A549 (cell line): ENCODE measurements at regions of chr5 and their contacts with region 1.

Region 1: DNA sequence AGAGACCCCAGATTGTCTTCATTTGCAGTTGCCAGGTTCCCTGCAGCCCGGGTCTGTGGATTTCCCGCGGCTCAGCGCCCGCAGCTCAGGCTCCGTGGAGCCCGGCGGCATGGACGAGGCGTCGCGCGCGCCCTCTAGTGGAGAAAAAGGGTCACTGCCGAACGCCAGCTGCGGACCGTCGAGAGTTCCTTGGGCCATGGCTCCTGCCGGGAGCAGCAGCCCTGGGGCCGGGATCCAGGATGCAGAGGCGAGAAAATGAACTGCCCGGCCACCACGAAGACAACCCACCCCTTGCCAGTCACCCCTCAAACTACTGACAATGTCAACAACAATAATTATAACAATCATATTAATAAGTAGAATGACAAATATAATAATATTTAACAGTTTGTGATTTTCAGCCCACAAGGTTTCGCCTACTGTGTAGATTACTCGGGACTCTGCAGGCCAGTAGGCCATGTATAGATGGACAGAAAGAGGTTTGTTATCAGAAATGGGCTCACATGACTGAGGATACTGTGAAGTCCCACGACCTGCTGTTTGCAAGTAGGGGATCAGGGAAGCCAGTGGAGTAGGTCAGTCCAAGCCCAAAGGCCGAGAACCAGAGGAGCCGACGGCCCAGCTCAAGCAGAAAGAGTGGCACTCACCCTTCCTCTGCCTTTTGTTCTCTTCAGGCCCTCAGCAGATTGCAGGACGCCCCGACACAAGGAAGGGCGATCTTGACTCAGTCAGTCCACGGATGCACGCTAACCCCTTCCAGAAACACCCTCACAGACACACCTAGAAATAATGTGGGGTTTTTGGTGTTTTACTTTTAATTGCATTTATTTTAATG is 43.1 kb downstream of the BOD1 start:
- DNase-seq: peak; percentile 55 to 66
- ATAC-seq: peak; percentile 95 to 99
- H3K4me3 ChIP-seq: no peak overlapping the region
- H3K27ac ChIP-seq: peak overlapping the region; percentile 62 to 63; a peak in 5 of 6 replicates
- H3K4me1 ChIP-seq: peaks cover 5% of the 10 kb centered on the region; the same call in 2 of the 3 replicates
- CTCF ChIP-seq: peak; percentile 92
- EP300 ChIP-seq: no peak
- POLR2A ChIP-seq: no peak
- RAD21 ChIP-seq: peak; percentile 85 to 94

Region 2: GRCh38 chr5:173331956-173332479 is 241.3 kb before region 1 on chr5:
- CTCF ChIA-PET with region 1: interaction called, 21 read pairs
- POLR2A ChIA-PET with region 1: interaction called, 5 read pairs
- DNase-seq: peak; percentile 79 to 87
- ATAC-seq: peak in 1 of 2 experiments; percentile 69; a peak in 3 of 6 replicates
- H3K4me3 ChIP-seq: no peak overlapping the region
- H3K27ac ChIP-seq: peak overlapping the region; percentile 88 to 97; a peak in 5 of 6 replicates
- H3K4me1 ChIP-seq: peaks cover 23% of the 10 kb centered on the region
- CTCF ChIP-seq: peak; percentile 73
- EP300 ChIP-seq: no peak
- POLR2A ChIP-seq: no peak
- RAD21 ChIP-seq: peak; percentile 84 to 93

Region 3: GRCh38 chr5:173412566-173412965 is 160.8 kb before region 1 on chr5:
- CTCF ChIA-PET with region 1: interaction called, 10 read pairs
- POLR2A ChIA-PET with region 1: no interaction called
- DNase-seq: no peak
- ATAC-seq: no peak
- H3K4me3 ChIP-seq: no peak overlapping the region
- H3K27ac ChIP-seq: no peak overlapping the region
- H3K4me1 ChIP-seq: no peaks in the 10 kb centered on the region
- CTCF ChIP-seq: no peak
- EP300 ChIP-seq: no peak
- POLR2A ChIP-seq: no peak
- RAD21 ChIP-seq: no peak

Region 4: GRCh38 chr5:173472141-173472543 is 101.2 kb before region 1 on chr5:
- CTCF ChIA-PET with region 1: interaction called, 13 read pairs
- POLR2A ChIA-PET with region 1: no interaction called
- DNase-seq: peak; percentile 40 to 73
- ATAC-seq: peak; percentile 88 to 93
- H3K4me3 ChIP-seq: no peak overlapping the region
- H3K27ac ChIP-seq: peak overlapping the region; percentile 82 to 83
- H3K4me1 ChIP-seq: peaks cover 26% of the 10 kb centered on the region
- CTCF ChIP-seq: no peak
- EP300 ChIP-seq: no peak
- POLR2A ChIP-seq: no peak
- RAD21 ChIP-seq: no peak

Region 5: GRCh38 chr5:173563252-173563651 is 10.1 kb before region 1 on chr5:
- CTCF ChIA-PET with region 1: interaction called, 13 read pairs
- POLR2A ChIA-PET with region 1: no interaction called
- DNase-seq: no peak
- ATAC-seq: no peak
- H3K4me3 ChIP-seq: no peak overlapping the region
- H3K27ac ChIP-seq: no peak overlapping the region
- H3K4me1 ChIP-seq: no peaks in the 10 kb centered on the region
- CTCF ChIP-seq: no peak
- EP300 ChIP-seq: no peak
- POLR2A ChIP-seq: no peak
- RAD21 ChIP-seq: no peak

Region 6: DNA sequence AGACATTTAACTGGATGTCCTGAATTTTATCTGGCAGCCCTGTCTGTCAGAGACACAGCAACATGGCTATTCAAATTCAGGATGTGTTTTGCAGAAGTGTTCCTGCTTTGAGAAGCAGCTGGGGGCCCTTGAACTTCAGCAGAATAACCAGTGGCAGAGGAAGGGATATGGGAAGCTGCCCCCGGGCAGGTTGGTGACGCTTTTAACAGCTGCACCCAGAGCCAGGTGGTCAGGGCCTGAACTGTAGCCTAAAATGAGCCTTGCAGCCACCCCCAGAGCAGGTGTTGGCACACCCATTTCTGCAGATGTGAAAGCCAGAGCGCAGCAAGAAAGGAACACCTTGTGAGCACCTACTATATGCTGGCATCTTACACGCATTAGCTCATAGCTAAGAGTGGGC is 171.8 kb after region 1 on chr5:
- CTCF ChIA-PET with region 1: no interaction called
- POLR2A ChIA-PET with region 1: no interaction called
- DNase-seq: no peak
- ATAC-seq: no peak
- H3K4me3 ChIP-seq: no peak overlapping the region
- H3K27ac ChIP-seq: peak overlapping the region; percentile 61 to 69; a peak in 4 of 6 replicates
- H3K4me1 ChIP-seq: peaks cover 16% of the 10 kb centered on the region
- CTCF ChIP-seq: no peak
- EP300 ChIP-seq: no peak
- POLR2A ChIP-seq: no peak
- RAD21 ChIP-seq: no peak